Astrocyte of the cerebellum (primary cell): ENCODE measurements at regions of chr20 and their contacts with region 1.

Region 1: DNA sequence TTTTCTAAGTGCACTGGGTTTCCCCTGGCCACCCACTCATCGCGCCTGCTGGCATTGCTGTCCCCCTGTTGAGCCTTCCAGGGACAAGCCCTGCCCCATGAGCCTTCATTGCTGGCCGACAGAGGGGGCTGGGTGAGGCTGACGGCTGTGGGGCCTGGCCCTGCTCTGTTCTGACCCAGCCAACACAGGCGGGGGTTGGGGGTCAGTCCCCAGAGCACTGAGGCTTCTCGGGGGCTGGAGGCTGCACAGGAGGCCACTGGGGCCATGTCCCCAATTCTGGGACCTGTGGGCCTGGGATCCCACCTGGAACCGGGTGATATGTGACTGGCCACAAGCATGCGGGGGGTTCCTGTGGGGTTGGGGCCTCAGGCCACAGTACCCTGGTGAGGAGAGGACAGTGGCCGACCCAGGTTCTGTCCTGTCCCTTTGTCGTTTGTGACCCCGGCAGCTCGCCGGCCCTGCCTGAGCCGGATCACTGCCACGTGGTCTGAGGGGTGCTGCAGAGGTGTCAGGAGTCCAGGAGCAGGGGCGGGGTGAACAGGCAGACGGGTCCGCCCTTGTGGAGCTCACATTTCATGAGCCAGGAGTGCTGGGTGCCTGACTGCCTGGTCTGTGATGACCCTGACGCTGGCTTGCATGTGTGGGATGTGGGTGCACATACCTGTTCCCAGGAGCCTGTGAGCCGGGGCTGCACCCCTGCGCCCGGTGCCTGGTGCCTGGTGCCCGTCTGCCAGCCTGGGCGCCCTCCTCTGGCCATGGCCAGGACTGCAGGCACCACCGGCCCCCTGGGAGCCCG is 2.1 kb upstream of the COL20A1 start:
- DNase-seq: no peak
- H3K4me3 ChIP-seq: no peak overlapping the region
- CTCF ChIP-seq: peak; percentile 65

Region 2: DNA sequence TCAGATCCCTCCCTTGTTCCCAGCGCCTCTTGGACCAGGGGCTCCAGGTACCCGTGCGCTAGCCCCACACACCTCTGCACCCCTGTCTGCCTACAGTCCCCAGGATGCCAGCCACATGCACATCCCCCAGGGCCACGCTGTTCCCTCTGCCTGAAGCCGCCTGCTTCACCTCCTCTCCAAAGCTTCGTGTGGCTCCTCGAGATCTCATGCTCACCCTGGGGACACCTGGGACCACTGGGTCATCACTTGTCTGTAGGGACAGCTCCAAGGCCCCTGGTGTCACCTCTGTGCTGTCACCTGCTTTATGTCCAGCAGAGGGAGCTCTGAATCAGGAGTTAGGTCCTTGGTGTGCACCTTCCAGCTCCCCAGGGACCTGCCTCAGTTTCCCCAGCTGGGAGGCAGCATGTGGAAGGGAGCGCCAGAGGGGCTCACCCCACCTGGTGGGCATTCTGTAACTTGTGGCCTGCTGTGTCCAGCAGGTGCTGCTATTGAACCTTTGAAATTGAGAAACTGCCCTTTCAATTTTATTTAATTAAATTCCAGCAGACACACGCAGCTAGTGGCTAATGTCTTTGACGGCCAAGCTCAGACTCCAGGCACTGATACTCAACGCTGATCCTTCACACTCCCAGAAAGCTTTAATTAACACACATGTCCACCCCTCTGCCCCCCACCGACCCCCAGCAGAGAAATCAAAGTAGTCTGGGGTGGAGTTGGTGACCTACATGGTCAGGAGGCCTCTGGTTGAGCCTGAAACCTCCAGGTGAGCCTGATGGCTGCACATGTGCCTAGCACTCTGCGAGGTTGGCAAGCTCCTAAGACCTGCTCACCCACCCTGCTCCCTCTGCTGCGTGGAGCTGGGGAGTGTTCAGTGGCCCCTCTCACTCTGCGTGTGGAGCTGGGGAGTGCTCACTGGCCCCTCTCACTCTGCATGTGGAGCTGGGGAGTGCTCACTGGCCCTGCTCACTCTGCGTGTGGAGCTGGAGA is 67.4 kb before region 1 on chr20:
- in situ Hi-C with region 1: loop called (anchors 5 kb)
- DNase-seq: peak; percentile 18
- H3K4me3 ChIP-seq: no peak overlapping the region
- CTCF ChIP-seq: peak; percentile 83

Region 3: DNA sequence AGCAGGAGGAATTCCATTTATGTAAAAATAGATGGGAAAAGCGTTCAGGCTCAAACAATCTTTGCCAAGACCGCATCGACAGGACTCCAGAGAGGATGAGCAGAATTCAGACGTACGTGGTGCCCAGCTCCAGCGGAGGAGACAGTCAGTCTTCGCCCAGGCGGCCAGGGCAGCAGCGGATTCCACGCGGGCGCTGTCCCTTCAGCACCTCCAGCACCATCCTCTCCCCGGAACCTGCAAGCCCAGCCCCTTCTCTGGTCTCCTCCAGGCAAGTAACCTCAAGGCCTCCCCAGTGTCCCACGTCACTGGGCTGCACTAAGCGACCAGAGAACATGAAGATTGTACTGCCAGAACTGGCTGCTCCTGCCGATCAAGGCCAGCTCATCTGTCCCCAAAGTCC is 184.3 kb after region 1 on chr20:
- in situ Hi-C with region 1: loop called (anchors 10 kb)
- DNase-seq: no peak
- H3K4me3 ChIP-seq: no peak overlapping the region
- CTCF ChIP-seq: no peak